SK-N-SH (cell line): ENCODE measurements at regions of chr18 and their contacts with region 1.

Region 1: DNA sequence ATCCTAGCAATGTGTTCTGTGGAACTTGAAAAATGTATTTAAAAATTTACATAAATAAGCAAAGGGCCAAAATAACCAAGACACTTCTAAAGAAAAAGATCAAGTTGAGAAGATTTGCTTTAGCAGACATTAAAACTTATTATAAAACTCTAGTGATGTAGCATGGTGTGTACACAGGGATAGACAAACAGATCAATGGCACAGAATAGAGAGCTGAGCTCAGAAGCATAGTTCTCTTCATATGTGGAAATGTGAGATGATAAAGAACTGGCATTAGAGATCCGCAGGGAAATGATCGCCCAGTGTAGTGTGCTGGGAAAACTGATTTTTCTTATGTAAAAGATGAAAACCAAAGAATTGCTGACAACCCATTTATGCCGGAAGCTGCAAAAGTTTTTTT is 39.4 kb downstream of the SERPINB8 start:
- DNase-seq: no peak
- H3K4me3 ChIP-seq: no peak overlapping the region
- H3K27ac ChIP-seq: no peak overlapping the region
- H3K4me1 ChIP-seq: no peaks in the 10 kb centered on the region
- H3K27me3 ChIP-seq: no peaks in the 10 kb centered on the region
- CTCF ChIP-seq: no peak
- EP300 ChIP-seq: no peak
- RAD21 ChIP-seq: no peak

Region 2: DNA sequence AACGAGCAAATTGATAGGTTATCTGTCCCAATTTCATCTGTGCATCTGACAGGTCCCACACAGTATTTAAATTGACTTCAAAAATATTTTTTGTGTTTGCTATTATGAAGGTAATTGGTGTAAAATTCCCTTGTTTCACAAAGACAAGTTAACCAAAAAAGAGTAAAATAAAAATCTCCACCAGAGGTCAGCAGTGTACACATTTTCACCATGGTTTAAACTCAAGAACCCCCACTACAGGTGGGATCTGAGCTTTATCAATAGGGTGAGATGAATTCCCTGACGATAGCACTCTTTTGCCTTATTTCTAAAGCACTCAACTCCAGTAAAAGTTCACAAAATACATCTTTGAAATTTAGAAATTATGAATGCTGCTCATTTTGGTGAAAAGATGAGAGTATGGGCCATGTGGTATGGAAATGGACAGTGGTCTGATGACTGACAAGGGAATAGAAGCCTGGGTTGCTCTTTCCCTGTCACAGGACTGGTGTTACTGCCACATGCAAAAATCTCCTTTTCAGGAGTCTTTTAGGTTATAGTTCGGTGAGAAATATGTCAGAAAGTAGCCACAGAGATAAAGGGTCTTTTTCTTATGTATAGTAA is 28.6 kb after region 1 on chr18:
- CTCF ChIA-PET with region 1: interaction called, 17 read pairs
- POLR2A ChIA-PET with region 1: no interaction called
- DNase-seq: peak; percentile 70
- H3K4me3 ChIP-seq: peak overlapping the region in 1 of 2 experiments; percentile 4; a peak in 1 of 4 replicates
- H3K27ac ChIP-seq: no peak overlapping the region
- H3K4me1 ChIP-seq: no peaks in the 10 kb centered on the region
- H3K27me3 ChIP-seq: no peaks in the 10 kb centered on the region
- CTCF ChIP-seq: peak; percentile 72
- EP300 ChIP-seq: no peak
- RAD21 ChIP-seq: peak; percentile 72